Aorta (tissue), 5 donors: ENCODE measurements at regions of chr14 and their contacts with region 1.

Region 1: DNA sequence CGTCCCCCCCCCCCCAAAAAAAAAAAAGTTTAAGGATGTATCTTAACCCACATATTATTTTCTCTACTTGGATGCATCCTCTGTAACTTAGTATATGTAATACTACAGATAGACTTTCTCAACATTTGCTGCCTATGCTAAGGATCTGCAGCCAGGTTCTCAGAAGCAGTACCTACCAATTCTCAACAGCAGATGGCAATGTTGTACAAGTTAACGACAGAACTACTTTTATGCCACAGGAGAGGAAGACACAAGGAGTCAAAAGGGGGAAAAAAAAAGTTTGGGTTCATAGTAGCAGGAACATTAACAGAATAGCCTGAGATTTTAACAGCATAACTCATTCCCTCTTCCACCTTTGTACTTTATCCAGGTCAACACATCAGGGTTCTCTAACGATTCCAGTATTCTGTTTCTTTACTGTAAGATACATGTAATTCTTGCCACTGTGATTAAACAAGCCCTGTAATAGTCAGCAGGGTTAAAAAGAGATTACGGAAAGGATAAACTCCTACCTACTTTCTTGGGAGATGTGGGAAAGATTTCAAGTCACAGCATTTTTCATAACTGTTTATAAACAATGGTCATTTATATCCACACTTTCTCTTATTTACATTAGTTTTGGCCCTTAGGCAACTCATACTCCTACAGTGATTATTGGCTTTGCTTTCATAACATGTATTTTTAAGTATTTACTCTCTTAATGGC is 5.7 kb upstream of the NEK9 start:
- DNase-seq: no peak
- ATAC-seq: peak; percentile 90
- H3K4me3 ChIP-seq: no peak overlapping the region
- H3K27ac ChIP-seq: no peak overlapping the region
- H3K4me1 ChIP-seq: no peaks in the 10 kb centered on the region
- H3K27me3 ChIP-seq: no peaks in the 10 kb centered on the region

Region 2: GRCh38 chr14:74697543-74697942 is 435.0 kb before region 1 on chr14:
- intact Hi-C with region 1: no loop called
- DNase-seq: no peak
- ATAC-seq: no peak
- H3K4me3 ChIP-seq: no peak overlapping the region
- H3K27ac ChIP-seq: no peak overlapping the region
- H3K4me1 ChIP-seq: peaks cover 1 to 2% of the 10 kb centered on the region in 2 donors
- H3K27me3 ChIP-seq: no peaks in the 10 kb centered on the region

Region 3: GRCh38 chr14:74747237-74747636 is 385.3 kb before region 1 on chr14:
- intact Hi-C with region 1: no loop called
- DNase-seq: no peak
- ATAC-seq: no peak
- H3K4me3 ChIP-seq: no peak overlapping the region
- H3K27ac ChIP-seq: no peak overlapping the region
- H3K4me1 ChIP-seq: no peaks in the 10 kb centered on the region
- H3K27me3 ChIP-seq: no peaks in the 10 kb centered on the region

Region 4: DNA sequence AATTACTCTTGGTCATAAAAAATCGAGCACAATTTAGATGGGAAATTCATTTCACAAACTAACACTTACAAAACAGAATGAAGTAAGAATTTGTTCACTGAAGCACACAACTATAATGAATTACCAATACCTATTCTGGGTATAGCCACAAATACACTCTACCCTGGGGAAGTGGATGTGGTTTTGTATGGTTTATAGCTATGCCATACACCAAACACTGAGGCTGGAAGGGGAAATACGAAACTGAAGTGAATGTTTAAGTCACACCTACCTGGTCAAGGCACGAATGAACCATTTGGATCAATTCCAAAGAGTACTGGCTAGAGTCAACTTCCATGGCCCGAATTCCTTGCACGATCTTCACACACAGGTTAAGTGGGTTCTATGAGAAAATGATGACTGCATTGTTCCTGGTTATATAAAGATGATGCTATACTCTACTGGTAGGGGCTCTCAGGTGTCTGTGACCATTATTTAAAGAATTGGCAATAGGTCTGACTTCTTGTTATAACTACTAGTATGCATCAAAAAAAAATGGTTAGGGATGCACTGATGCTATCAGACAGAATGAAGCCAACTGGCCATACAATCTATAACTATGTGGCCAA is 18.5 kb before region 1 on chr14:
- intact Hi-C with region 1: no loop called
- DNase-seq: no peak
- ATAC-seq: no peak
- H3K4me3 ChIP-seq: no peak overlapping the region
- H3K27ac ChIP-seq: no peak overlapping the region
- H3K4me1 ChIP-seq: no peaks in the 10 kb centered on the region
- H3K27me3 ChIP-seq: no peaks in the 10 kb centered on the region

Region 5: DNA sequence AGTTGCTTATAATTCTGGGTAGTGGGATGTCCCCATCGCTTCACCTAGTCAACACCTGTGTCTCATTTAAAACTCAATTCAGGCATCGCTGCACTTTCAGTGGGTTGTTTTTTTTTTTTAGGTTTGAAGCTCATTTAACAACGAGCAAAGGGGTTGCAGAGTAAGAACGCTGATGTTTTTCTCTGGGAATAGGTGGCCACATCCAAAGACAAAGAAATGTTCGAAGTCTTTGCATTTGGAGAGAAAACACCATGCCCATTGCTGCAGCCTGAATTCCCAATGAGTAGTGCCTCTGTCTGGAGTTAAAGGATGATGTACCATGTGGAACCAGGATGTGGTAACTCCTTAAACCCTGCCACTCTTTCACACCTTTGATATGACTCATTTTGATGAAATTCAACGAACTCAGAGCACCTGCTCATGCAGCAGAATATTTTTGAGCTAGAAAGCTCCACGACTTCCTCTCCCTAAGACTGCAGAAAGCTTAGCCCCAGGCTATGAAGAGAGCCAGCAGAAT is 354.7 kb after region 1 on chr14:
- intact Hi-C with region 1: loop called (anchors 5 to 10 kb)
- DNase-seq: no peak
- ATAC-seq: no peak
- H3K4me3 ChIP-seq: no peak overlapping the region
- H3K27ac ChIP-seq: no peak overlapping the region
- H3K4me1 ChIP-seq: no peaks in the 10 kb centered on the region
- H3K27me3 ChIP-seq: no peaks in the 10 kb centered on the region

Region 6: DNA sequence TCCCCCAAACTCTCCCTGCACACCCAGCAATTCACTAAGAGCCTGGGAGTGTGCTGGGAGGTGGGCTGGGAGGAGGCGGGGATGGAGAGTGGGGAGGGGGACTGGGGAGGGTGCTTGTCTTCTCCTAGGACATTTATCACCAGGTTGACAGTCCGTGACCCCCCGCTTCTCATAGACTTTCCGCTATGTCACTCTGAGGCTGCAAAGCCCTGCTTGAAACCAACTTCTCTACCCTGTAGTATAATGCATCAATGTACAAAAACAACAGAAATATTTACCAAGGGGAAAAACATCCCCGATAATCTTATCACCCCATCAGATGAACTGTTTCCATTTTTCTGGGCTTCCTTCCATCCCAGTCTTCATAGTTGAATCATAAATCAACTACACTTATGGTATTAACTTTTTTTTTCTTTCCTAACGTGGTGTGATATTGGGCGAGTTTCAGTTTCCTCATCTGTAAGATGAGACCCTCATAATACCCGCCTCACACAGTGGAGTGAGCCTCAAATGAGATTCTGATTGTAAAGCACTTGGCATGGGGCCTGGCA is 361.1 kb after region 1 on chr14:
- intact Hi-C with region 1: loop called (anchors 5 to 10 kb)
- DNase-seq: no peak
- ATAC-seq: no peak
- H3K4me3 ChIP-seq: no peak overlapping the region
- H3K27ac ChIP-seq: no peak overlapping the region
- H3K4me1 ChIP-seq: no peaks in the 10 kb centered on the region
- H3K27me3 ChIP-seq: no peaks in the 10 kb centered on the region

Region 7: DNA sequence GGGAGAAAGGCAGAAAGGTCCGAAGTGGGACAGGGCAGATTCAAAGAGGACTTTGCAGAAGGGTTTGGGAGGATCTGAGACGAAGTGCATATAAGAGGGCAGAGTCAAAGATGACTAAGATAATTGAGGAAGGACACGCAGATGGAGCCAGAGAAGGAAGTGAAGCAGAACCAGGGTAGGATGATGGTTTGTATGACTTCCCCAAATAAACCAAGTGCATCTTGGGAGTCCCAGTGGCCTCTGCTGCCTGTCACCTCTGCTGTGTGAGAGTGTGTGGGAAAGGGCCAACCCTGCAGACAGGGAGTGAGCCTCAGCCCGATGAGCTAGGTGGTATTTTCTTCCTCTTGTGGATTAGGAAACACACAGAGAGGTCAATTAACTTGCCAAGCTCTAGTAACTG is 482.7 kb after region 1 on chr14:
- intact Hi-C with region 1: no loop called
- DNase-seq: peak in 1 of 2 donors; percentile 62
- ATAC-seq: no peak
- H3K4me3 ChIP-seq: no peak overlapping the region
- H3K27ac ChIP-seq: no peak overlapping the region
- H3K4me1 ChIP-seq: no peaks in the 10 kb centered on the region
- H3K27me3 ChIP-seq: no peaks in the 10 kb centered on the region